Activated T-helper 1 cell treated with anti-CD3 and anti-CD28 coated beads, Interleukin-12 subunit alpha, Interleukin-12 subunit beta, Interleukin-2, Interleukin-4 antibody, amounts not matched to agents 30 ng/mL and 10 ng/mL and 1 ng/mL, durations not matched to agents 14 hours and 24 hours and 36 hours (primary cell): ENCODE measurements at regions of chr6 and their contacts with region 1.

Region 1: GRCh38 chr6:31546962-31547726 is at the start of gene NFKBIL1:
- DNase-seq: peak; percentile 88
- H3K4me3 Mint-ChIP-seq: peak within 1 kb of the TSS; percentile 87
- H3K27ac Mint-ChIP-seq: peak within 1 kb of the TSS; percentile 82
- H3K4me1 Mint-ChIP-seq: peaks cover 36% of the 10 kb centered on the region
- H3K27me3 Mint-ChIP-seq: peaks cover 3% of the 10 kb centered on the region
- total RNA-seq, gene NFKBIL1: 18.2 and 18.9 TPM in 2 replicates

Region 2: DNA sequence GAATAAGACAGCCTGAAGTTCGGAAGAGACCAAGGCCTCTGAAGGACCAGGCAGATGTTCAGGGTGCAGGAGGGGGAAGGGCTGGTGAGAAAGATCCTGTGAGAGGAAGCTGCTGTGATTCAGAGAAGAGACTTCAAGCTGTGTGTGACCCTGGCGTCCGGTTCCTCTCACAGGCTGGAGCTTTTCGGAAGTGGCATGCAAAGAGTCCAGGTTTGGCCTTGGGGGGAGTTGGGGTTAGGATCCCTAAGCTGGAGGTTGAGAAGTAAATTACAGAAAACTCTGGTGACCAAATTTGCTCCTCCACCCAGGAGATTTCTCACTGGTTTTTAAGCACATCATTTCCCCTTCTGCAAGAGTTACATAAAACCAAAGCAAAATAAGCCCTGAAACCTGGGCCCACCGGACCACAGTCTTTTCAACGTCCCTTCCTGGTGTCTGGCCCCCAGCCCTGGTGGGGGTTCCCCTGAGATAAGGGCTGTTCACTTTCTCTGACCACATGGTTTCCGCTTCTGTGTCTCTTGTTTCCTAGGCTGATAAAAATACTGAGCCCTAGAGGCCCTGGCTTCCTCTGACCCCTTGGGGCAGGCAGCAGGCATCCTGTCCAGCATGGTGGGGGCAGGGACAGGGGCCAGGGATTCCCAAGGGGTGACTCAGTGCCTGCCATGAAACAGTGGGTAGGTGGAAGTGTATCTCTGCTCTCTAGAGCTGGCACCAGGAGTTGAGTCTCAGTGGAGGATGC is 13.0 kb after region 1 on chr6:
- intact Hi-C with region 1: loop called (anchors 1 kb)
- DNase-seq: peak; percentile 41
- H3K4me3 Mint-ChIP-seq: peak overlapping the region; percentile 69
- H3K27ac Mint-ChIP-seq: peak overlapping the region; percentile 95
- H3K4me1 Mint-ChIP-seq: peaks cover 72% of the 10 kb centered on the region
- H3K27me3 Mint-ChIP-seq: peaks cover 5% of the 10 kb centered on the region

Region 3: DNA sequence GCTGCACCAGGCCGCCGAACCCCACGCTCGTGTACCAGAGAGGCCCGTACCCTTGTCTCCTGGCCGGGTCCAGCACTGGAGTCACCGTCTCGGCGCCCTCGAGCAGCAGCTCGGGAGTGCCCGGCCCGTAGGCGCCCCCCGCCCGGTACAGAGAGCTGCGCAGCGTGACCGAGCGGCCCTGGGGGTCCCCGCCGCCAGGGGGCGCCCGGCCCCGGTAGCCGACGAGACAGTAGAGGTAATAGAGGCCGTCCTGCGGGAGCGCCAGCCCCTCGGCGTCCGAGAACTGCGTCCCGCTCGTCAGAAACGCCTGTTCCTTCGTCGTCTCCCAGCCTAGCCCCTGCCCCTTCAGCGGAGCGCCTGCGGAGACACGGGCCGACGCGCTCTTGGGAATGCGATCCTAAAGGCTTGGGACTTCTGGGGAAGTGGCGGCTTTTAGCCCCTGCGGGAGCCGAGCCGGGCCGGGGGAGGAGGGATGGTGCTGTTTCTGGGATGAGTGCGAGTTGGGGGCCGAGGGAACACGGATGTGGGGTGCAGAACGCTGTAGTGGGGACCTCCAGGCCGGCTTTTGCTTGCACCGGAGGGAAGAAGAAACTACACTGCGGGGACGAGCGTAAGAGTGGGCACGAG is 33.8 kb after region 1 on chr6:
- intact Hi-C with region 1: loop called (anchors 1 kb)
- DNase-seq: peak; percentile 81
- H3K4me3 Mint-ChIP-seq: peak overlapping the region; percentile 92
- H3K27ac Mint-ChIP-seq: peak overlapping the region; percentile 93
- H3K4me1 Mint-ChIP-seq: peaks cover 63% of the 10 kb centered on the region
- H3K27me3 Mint-ChIP-seq: no peaks in the 10 kb centered on the region

Region 4: GRCh38 chr6:31631681-31632278 is 84.6 kb after region 1 on chr6:
- intact Hi-C with region 1: no loop called
- DNase-seq: no peak
- H3K4me3 Mint-ChIP-seq: no peak overlapping the region
- H3K27ac Mint-ChIP-seq: no peak overlapping the region
- H3K4me1 Mint-ChIP-seq: peaks cover 9% of the 10 kb centered on the region
- H3K27me3 Mint-ChIP-seq: no peaks in the 10 kb centered on the region

Region 5: GRCh38 chr6:31652925-31653718 is 106.0 kb after region 1 on chr6:
- intact Hi-C with region 1: loop called (anchors 1 kb)
- DNase-seq: peak; percentile 81
- H3K4me3 Mint-ChIP-seq: peak overlapping the region; percentile 93
- H3K27ac Mint-ChIP-seq: peak overlapping the region; percentile 100
- H3K4me1 Mint-ChIP-seq: peaks cover 48% of the 10 kb centered on the region
- H3K27me3 Mint-ChIP-seq: no peaks in the 10 kb centered on the region

Region 6: DNA sequence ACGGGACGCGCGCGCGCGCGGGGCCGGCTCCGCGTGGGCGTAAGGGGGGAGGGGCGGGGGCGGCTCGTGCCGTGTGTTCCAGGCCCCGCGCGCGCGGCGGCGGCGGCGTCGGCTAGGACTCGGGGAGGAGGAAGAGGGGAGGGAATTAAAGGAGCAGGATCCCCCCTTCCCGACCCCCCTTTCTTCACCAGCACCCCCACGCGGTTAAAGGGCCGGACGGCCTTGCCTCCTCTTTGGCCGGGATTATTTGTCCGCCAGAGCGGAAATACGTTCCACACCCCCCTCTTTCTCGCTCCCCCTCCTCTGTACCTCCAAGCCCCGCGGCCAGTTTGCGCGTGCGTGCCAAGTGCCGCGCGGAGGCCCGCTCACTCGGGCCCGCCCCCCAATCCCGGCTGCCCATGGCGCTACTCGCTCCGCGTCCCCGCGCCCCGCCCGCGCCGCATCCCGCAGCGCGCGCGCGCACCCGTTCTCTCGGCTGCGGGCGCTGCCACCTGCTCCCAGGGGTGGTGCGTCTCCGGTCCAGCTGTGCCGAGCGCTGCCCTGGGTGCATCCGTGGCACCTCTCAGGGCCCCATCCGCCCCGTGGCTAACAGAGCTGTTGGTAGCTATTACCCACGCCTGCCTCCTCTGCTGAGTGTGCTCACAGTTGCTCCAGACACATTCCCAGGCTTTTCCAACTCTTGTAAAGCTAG is 355.0 kb after region 1 on chr6 and contains the start of gene ZBTB12:
- intact Hi-C with region 1: loop called (anchors 2 kb)
- DNase-seq: peak; percentile 82
- H3K4me3 Mint-ChIP-seq: peak within 1 kb of the TSS; percentile 81
- H3K27ac Mint-ChIP-seq: peak within 1 kb of the TSS; percentile 88
- H3K4me1 Mint-ChIP-seq: peaks cover 37% of the 10 kb centered on the region
- H3K27me3 Mint-ChIP-seq: no peaks in the 10 kb centered on the region
- total RNA-seq, gene ZBTB12: 4.6 and 5.1 TPM in 2 replicates